ENCODE measurements at regions of chr20 and their contacts with region 1.

Region 1: DNA sequence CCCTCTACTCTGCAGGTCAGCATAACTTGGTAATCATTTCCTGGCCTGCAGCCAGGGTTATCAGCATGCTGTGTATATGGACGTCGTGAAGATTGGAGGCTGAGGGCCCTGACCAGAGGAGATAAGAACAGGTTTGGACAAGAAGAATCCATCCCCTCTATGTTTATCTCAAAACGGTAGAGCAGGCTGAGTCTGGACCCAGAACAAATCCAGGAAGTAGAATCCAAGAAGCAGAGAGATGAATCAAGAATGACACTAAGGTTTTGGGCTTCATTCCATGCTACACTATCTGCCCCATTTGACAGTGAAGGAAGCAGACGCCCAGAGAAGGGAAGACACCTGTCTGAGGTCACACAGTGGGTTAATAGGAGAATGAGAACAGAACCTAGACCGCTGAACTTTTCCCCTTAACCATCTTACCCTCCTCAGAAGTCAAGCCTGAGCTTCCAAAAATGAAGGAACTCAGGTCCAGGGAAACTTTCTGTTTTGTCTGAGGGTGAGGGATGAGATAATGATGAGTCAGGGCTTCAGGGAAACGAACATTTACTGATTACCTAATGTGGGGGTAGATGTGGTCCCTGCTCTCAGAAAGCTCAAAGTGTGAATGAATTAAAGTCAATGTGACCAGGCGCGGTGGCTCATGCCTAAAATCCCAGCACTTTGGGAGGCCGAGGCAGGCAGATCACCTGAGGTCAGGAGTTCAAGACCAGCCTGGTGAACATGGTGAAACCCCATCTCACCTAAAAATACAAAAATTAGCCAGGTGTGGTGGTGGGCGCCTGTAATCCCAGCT is 9.4 kb upstream of the COMMD7 start:
- DNase-seq: no peak
- ATAC-seq: no peak
- H3K4me3 ChIP-seq: no peak overlapping the region
- H3K27ac ChIP-seq: no peak overlapping the region
- H3K4me1 ChIP-seq: no peaks in the 10 kb centered on the region
- H3K27me3 ChIP-seq: no peaks in the 10 kb centered on the region
- CTCF ChIP-seq: no peak

Region 2: DNA sequence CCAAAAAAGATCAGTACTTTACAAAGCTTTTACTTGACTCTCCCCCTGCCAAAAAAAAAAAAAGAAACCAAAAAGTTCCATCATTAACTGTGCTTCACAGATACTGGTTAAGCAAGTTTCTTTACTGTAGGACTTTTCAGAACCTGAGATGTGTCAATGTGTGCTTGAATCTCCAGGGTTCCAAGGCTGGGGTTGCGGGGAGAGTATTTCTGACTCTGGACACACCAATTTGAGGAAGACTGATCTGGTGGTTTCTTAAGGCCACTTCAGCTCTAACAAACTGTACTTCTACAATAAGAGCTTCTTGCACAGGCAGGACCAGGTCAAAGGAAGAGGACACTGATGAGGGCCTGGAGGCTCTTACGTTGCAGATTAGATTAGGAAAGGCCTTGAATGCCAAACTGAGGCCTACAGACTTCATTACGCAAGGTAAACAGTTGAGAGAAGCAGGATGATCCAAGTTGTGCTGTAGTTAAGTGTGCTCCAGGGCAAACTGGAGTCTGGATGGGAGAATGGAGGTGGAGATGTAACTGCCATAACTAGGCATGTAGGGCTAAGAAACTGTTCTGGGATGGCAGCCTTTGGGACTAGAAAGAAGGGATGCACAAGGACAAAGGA is 33.8 kb before region 1 on chr20:
- CTCF ChIA-PET with region 1: no interaction called
- POLR2A ChIA-PET with region 1: interaction called, 11 read pairs
- in situ Hi-C with region 1: no loop called
- intact Hi-C with region 1: no loop called
- DNase-seq: no peak
- ATAC-seq: no peak
- H3K4me3 ChIP-seq: no peak overlapping the region
- H3K27ac ChIP-seq: no peak overlapping the region
- H3K4me1 ChIP-seq: no peaks in the 10 kb centered on the region
- H3K27me3 ChIP-seq: no peaks in the 10 kb centered on the region
- CTCF ChIP-seq: no peak

Region 3: DNA sequence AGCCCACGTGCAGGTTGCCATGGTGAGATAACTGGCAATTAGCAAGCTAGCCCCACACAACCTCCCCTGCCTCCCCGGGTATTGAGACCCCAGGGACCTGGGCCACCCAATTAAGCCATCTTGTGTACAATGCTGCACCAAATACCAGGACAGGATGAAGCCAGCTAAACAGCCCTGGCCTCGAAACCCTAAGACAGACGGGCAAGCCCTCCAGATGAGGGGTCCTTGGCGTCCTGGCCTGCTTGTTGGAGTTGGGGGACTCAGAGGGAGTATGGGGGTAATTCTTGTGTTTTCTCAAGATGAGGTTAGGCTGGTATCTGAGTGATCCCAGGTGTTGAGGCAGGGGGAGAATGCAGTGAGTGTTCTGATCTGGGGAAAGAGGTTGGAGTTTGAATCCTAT is 58.3 kb after region 1 on chr20:
- CTCF ChIA-PET with region 1: no interaction called
- POLR2A ChIA-PET with region 1: interaction called, 12 read pairs
- in situ Hi-C with region 1: no loop called
- intact Hi-C with region 1: no loop called
- DNase-seq: no peak
- ATAC-seq: no peak
- H3K4me3 ChIP-seq: no peak overlapping the region
- H3K27ac ChIP-seq: no peak overlapping the region
- H3K4me1 ChIP-seq: no peaks in the 10 kb centered on the region
- H3K27me3 ChIP-seq: no peaks in the 10 kb centered on the region
- CTCF ChIP-seq: no peak